Gastrocnemius medialis (tissue), 4 donors: ENCODE measurements at regions of chr2 and their contacts with region 1.

Region 1: GRCh38 chr2:61439241-61440002 is 31.5 kb downstream of the USP34 start:
- DNase-seq: peak; percentile 73 to 92
- ATAC-seq: peak; percentile 65 to 66
- H3K4me3 ChIP-seq: peak overlapping the region in 1 of 4 donors; percentile 9
- H3K27ac ChIP-seq: peak overlapping the region; percentile 83 to 86 (median 85)
- H3K4me1 ChIP-seq: peaks cover 81 to 85% of the 10 kb centered on the region in 2 donors
- H3K27me3 ChIP-seq: no peaks in the 10 kb centered on the region
- CTCF ChIP-seq: no peak
- POLR2A ChIP-seq: no peak

Region 2: GRCh38 chr2:61368687-61369665 is 70.4 kb before region 1 on chr2:
- in situ Hi-C with region 1: no loop called
- intact Hi-C with region 1: no loop called
- DNase-seq: no peak
- ATAC-seq: no peak
- H3K4me3 ChIP-seq: no peak overlapping the region
- H3K27ac ChIP-seq: no peak overlapping the region
- H3K4me1 ChIP-seq: no peaks in the 10 kb centered on the region
- H3K27me3 ChIP-seq: no peaks in the 10 kb centered on the region
- CTCF ChIP-seq: no peak
- POLR2A ChIP-seq: no peak

Region 3: GRCh38 chr2:61705625-61706024 is 266.2 kb after region 1 on chr2:
- in situ Hi-C with region 1: no loop called
- intact Hi-C with region 1: loop called (anchors 2 kb)
- DNase-seq: peak; percentile 85 to 93
- ATAC-seq: peak; percentile 82 to 84
- H3K4me3 ChIP-seq: no peak overlapping the region
- H3K27ac ChIP-seq: peak overlapping the region; percentile 86 to 98 (median 92)
- H3K4me1 ChIP-seq: peaks cover 28 to 51% of the 10 kb centered on the region in 2 donors
- H3K27me3 ChIP-seq: no peaks in the 10 kb centered on the region
- CTCF ChIP-seq: no peak
- POLR2A ChIP-seq: peak in 1 of 2 donors; percentile 60